ENCODE measurements at regions of chr18 and their contacts with region 1.

Region 1: DNA sequence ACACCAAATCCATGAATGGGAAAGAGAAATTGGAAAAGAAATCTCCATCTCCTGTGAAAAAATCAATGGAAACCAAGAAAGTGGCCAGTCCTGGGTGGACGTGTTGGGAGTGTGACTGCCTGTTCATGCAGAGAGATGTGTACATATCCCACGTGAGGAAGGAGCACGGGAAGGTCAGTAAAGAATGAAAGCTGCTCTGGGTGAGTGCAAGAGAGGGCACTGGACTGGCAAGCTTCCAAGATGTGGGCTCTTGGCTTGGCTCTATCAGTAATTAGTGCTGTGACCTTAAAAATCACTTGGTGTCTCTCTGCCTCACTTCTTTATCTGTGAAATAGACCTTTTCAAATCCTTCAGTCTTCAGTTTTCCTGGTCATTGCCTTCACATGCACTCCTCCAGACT is 89.0 kb downstream of the ZNF532 start:
- DNase-seq: peak in 4 of 5 donors; percentile 70 to 83 (median 76)
- ATAC-seq: peak; percentile 88 to 95 (median 94)
- H3K4me3 ChIP-seq: no peak overlapping the region
- H3K27ac ChIP-seq: peak overlapping the region in 5 of 12 donors; percentile 8 to 68 (median 43)
- H3K4me1 ChIP-seq: peaks cover 0 to 34% (median 9%) of the 10 kb centered on the region in 12 donors
- H3K27me3 ChIP-seq: no peaks in the 10 kb centered on the region
- CTCF ChIP-seq: no peak
- POLR2A ChIP-seq: no peak

Region 2: DNA sequence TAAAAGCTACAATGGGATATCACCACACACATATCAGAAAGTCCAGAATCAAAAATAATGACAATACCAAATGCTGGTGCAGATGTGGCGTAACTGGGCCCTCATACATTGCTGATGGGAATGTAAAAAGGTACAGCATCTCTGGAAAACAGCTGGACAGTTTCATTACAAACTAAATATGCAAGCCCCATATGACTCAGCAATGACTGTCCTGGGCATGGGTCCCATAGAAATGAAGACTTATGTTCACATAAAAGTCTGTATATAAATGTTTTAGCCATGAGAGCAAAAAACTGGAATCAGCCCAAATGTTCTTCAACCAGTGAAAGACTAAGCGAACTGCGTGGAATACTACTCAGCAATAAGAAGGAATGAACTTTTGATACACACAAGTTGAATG is 381.4 kb before region 1 on chr18:
- intact Hi-C with region 1: no loop called
- DNase-seq: no peak
- ATAC-seq: no peak
- H3K4me3 ChIP-seq: no peak overlapping the region
- H3K27ac ChIP-seq: peak overlapping the region in 2 of 12 donors; percentile 8 to 27
- H3K4me1 ChIP-seq: peaks cover 0 to 41% (median 7%) of the 10 kb centered on the region in 12 donors
- H3K27me3 ChIP-seq: no peaks in the 10 kb centered on the region
- CTCF ChIP-seq: no peak
- POLR2A ChIP-seq: no peak

Region 3: DNA sequence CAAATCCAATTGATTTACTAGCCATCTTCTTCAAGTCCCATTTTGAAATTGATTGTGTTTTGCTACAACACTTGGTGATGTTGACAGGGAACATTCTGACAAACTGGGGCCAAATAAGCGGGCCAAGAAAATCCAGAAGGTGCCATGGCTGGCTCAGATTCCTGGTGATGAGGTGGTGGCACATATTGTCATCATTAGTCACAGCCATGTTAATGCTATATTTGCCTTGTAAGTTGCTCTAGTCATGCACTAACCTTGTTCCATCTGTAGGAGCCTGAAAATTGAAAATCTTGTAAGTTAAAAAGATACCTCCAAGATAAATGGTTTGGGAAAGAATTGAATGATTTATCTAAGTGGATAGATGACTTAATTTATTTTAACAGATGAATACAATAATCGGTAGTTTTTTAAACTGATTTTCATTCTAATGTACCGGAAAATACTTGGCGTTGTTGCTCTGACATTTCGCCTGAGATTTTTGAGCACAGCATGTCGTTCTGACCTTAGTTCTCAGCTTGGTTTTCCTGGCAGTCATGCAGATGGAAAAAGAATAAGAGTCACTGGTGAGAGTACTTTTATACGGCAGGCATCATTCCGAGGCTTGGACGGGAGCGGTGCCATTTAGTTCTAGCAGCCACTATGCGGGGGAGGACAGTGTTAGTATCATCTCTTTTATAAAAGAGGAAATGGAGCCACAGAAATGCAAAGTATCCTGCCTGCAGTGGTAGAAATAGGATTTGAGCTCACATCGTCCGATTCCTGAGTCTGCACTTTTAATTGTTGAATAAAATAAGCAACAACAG is 45.0 kb after region 1 on chr18:
- intact Hi-C with region 1: loop called in 1 of 10 experiments (anchors 5 kb)
- DNase-seq: peak; percentile 70 to 80 (median 72)
- ATAC-seq: peak; percentile 87 to 89 (median 88)
- H3K4me3 ChIP-seq: peak overlapping the region in 8 of 12 donors; percentile 10 to 36 (median 26)
- H3K27ac ChIP-seq: peak overlapping the region; percentile 81 to 95 (median 88)
- H3K4me1 ChIP-seq: peaks cover 11 to 62% (median 46%) of the 10 kb centered on the region in 12 donors
- H3K27me3 ChIP-seq: no peaks in the 10 kb centered on the region
- CTCF ChIP-seq: peak in 1 of 12 donors; percentile 20
- POLR2A ChIP-seq: peak in 1 of 2 donors; percentile 31